SK-N-SH (cell line): ENCODE measurements at regions of chr6 and their contacts with region 1.

Region 1: DNA sequence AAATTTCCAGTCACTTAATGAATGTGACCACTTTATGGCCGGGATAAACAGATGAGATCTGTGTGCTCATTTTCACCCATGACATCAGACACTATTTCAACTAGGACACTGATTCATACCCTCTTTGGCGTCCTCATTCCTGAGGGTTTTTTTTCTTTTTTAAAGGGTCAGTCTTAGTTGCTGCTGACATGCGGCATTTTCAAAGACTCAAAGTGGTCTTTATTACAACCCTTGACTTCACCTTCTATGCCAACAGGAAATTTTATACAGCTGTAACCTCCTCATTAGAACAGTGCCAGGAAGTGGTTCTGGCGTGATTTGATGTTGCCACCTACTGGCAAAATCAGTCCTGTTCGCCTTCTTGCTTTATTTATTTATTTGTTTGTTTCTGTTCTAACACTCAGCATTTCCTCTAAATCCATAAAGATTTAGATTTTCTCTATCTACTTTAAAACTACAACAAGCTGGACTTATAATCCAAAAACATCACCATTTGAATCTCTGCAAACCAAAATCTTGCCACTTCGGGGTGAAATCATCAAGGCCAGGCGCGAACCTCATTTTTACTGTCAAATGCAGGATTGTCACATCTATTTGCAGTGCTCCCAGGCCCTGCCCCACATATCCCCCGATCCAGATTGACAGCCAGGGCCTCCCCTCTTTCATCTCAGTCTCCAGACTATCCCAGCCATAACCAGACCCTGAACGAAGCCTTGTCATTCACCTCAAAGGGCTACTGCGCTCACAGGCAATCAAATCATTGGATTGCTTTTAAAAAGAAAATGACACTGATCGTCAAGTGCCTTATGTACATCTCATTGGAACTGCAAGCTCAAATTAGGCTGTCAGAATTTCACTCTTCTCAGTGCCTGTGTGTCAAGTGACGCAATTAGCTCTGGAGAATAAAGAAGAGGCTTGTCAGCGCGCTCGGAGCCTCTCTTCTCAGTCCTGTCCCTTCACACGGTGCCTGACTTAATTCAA is 77.5 kb downstream of the C6orf118 start:
- DNase-seq: peak; percentile 37
- H3K4me3 ChIP-seq: peak overlapping the region in 1 of 2 experiments; percentile 29; a peak in 1 of 4 replicates
- H3K27ac ChIP-seq: no peak overlapping the region
- H3K4me1 ChIP-seq: no peaks in the 10 kb centered on the region
- H3K27me3 ChIP-seq: no peaks in the 10 kb centered on the region
- CTCF ChIP-seq: peak; percentile 14; the same call in 1 of the 2 replicates
- EP300 ChIP-seq: no peak
- RAD21 ChIP-seq: peak; percentile 81

Region 2: DNA sequence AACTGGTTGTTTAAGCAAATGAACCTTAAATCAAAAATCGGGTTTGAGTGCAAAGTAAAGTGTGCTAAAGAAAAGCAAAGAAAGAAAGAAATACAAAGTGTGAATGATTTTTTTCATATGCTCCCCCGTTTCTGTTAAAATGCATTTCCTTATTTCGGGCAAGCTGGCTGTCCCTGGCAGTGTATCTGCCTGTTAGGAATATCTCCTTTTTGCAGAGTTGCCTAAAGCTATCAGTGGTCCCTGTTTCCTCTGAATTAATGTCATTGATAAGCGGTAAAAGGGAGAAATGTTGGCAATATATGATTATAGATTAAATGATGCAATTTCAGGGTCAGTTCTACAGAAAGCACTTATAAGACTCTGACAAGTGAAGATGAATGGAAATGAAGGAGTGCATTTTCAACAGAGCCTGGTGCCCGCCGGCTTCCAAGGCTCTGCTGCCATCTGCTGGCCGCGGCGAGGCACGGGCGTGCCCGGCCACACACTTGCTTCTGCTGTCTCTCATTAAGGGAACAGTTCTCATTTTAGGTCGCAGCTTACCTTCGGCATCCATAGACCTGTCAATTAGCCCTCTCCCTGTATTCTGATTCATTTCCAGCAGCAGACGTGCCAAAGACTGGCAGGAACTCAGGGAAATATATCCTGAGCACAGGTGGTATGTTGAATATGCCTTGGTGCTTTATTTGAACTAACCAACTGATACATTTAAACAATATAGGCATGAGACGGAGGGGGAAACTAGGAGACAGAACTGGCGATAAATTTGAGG is 304.4 kb before region 1 on chr6:
- CTCF ChIA-PET with region 1: interaction called, 27 read pairs
- POLR2A ChIA-PET with region 1: no interaction called
- DNase-seq: peak; percentile 75
- H3K4me3 ChIP-seq: peak overlapping the region; percentile 25 to 28; a peak in 2 of 4 replicates
- H3K27ac ChIP-seq: no peak overlapping the region
- H3K4me1 ChIP-seq: peaks cover 0 to 12% of the 10 kb centered on the region in 2 experiments; a peak in 2 of 4 replicates
- H3K27me3 ChIP-seq: no peaks in the 10 kb centered on the region
- CTCF ChIP-seq: peak; percentile 82
- EP300 ChIP-seq: no peak
- RAD21 ChIP-seq: peak; percentile 93

Region 3: GRCh38 chr6:165049364-165049763 is 182.5 kb before region 1 on chr6:
- CTCF ChIA-PET with region 1: interaction called, 16 read pairs
- POLR2A ChIA-PET with region 1: no interaction called
- DNase-seq: peak; percentile 37
- H3K4me3 ChIP-seq: no peak overlapping the region
- H3K27ac ChIP-seq: no peak overlapping the region
- H3K4me1 ChIP-seq: no peaks in the 10 kb centered on the region; a peak in 1 of 4 replicates
- H3K27me3 ChIP-seq: no peaks in the 10 kb centered on the region
- CTCF ChIP-seq: peak; percentile 41
- EP300 ChIP-seq: no peak
- RAD21 ChIP-seq: peak; percentile 59

Region 4: DNA sequence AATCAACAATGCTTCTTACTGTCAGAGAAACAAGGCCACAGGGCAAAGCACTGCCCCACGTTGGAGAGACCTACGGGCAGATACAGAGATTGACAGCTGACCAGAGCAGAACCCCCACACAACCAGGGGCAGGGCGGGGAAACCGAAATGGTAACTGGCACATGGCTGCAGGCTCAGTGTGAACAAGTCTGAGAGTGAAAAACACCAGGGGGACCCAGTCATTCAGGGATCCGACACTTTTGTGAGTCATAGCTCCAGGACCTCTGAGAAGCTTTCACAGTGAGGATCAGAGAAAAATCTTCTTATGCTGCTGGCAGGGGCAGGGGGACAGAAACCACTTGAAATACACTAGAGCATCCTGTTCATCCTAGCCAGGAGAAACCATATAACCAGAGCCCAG is 176.6 kb before region 1 on chr6:
- CTCF ChIA-PET with region 1: interaction called, 16 read pairs
- POLR2A ChIA-PET with region 1: no interaction called
- DNase-seq: no peak
- H3K4me3 ChIP-seq: no peak overlapping the region
- H3K27ac ChIP-seq: no peak overlapping the region
- H3K4me1 ChIP-seq: no peaks in the 10 kb centered on the region
- H3K27me3 ChIP-seq: no peaks in the 10 kb centered on the region
- CTCF ChIP-seq: no peak
- EP300 ChIP-seq: no peak
- RAD21 ChIP-seq: no peak

Region 5: GRCh38 chr6:165244524-165245247 is 12.8 kb after region 1 on chr6:
- CTCF ChIA-PET with region 1: interaction called, 14 read pairs
- POLR2A ChIA-PET with region 1: no interaction called
- DNase-seq: no peak
- H3K4me3 ChIP-seq: no peak overlapping the region
- H3K27ac ChIP-seq: no peak overlapping the region
- H3K4me1 ChIP-seq: no peaks in the 10 kb centered on the region
- H3K27me3 ChIP-seq: no peaks in the 10 kb centered on the region
- CTCF ChIP-seq: no peak
- EP300 ChIP-seq: no peak
- RAD21 ChIP-seq: no peak

Region 6: GRCh38 chr6:165274611-165275010 is 42.7 kb after region 1 on chr6:
- CTCF ChIA-PET with region 1: no interaction called
- POLR2A ChIA-PET with region 1: no interaction called
- DNase-seq: no peak
- H3K4me3 ChIP-seq: no peak overlapping the region
- H3K27ac ChIP-seq: no peak overlapping the region
- H3K4me1 ChIP-seq: no peaks in the 10 kb centered on the region
- H3K27me3 ChIP-seq: no peaks in the 10 kb centered on the region
- CTCF ChIP-seq: no peak
- EP300 ChIP-seq: no peak
- RAD21 ChIP-seq: no peak

Region 7: GRCh38 chr6:165641672-165642156 is 409.8 kb after region 1 on chr6:
- CTCF ChIA-PET with region 1: no interaction called
- POLR2A ChIA-PET with region 1: no interaction called
- DNase-seq: no peak
- H3K4me3 ChIP-seq: no peak overlapping the region
- H3K27ac ChIP-seq: no peak overlapping the region
- H3K4me1 ChIP-seq: peaks cover 0 to 4% of the 10 kb centered on the region in 2 experiments; a peak in 1 of 4 replicates
- H3K27me3 ChIP-seq: no peaks in the 10 kb centered on the region
- CTCF ChIP-seq: no peak
- EP300 ChIP-seq: no peak
- RAD21 ChIP-seq: no peak